PC-9 (cell line): ENCODE measurements at regions of chr6 and their contacts with region 1.

Region 1: DNA sequence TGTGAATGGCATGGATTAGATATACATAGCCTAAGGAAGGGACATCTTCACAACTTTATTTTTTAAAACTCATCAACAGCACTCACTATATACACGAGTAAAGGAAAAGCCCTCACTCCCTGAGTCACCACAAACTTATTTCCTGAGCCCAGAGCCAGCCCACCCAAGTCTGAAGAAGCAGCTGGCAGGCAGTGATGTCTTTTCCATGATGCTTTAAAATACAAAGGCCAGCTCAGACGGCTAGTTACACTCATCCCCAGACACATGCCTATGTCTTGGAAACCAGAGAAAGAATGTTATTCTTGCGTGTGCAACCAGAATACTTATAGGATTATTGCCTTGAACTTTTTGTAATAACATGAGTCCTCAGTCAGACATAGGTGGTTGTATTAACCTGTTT is 114.4 kb downstream of the ADGRG6 start:
- DNase-seq: no peak
- H3K4me3 ChIP-seq: no peak overlapping the region
- H3K27ac ChIP-seq: no peak overlapping the region
- H3K4me1 ChIP-seq: peaks cover 35% of the 10 kb centered on the region
- H3K27me3 ChIP-seq: no peaks in the 10 kb centered on the region
- CTCF ChIP-seq: no peak

Region 2: GRCh38 chr6:142301651-142302370 is 114.4 kb before region 1 on chr6 and contains the start of gene ADGRG6:
- CTCF ChIA-PET with region 1: no interaction called
- POLR2A ChIA-PET with region 1: no interaction called
- intact Hi-C with region 1: loop called (anchors 1 kb)
- DNase-seq: peak; percentile 61
- H3K4me3 ChIP-seq: peak within 1 kb of the TSS; percentile 88
- H3K27ac ChIP-seq: peak within 1 kb of the TSS; percentile 78
- H3K4me1 ChIP-seq: peaks cover 41% of the 10 kb centered on the region
- H3K27me3 ChIP-seq: no peaks in the 10 kb centered on the region
- CTCF ChIP-seq: no peak
- total RNA-seq, gene ADGRG6: 24.0 and 30.3 TPM in 2 replicates

Region 3: DNA sequence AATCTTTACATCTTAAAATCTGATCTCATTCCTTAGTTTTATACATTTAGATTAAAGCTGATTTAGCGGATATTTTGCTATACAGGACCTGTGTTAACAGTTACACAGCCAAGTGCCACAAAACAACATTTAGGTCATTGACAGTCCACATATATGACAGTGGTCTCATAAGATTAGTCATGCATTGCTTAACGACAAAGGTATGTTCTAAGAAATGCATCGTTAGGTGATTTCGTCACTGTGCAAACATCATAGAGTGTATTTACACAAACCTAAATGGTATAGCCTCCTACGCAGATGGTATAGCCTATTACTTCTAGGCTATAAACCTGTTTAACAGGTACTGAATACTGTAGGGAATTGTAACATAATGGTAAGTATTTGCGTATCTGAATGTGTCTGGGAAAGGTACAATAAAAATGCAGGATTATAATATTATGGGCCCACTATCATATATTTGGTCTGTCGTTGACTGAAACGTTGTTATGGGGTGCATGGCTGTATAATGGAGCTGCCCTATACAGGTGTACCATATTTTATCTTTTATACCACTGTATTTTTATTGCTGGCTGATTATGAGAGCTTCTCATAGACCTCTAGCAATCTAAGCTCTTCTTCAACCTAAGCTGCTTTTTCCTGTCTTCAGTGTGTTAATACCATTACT is 92.7 kb before region 1 on chr6:
- CTCF ChIA-PET with region 1: interaction called, 19 read pairs
- POLR2A ChIA-PET with region 1: no interaction called
- intact Hi-C with region 1: no loop called
- DNase-seq: peak; percentile 25 to 98
- H3K4me3 ChIP-seq: peak overlapping the region; percentile 19; the same call in 1 of the 2 replicates
- H3K27ac ChIP-seq: peak overlapping the region; percentile 85
- H3K4me1 ChIP-seq: peaks cover 33% of the 10 kb centered on the region
- H3K27me3 ChIP-seq: no peaks in the 10 kb centered on the region
- CTCF ChIP-seq: no peak

Region 4: GRCh38 chr6:142378138-142378875 is 37.9 kb before region 1 on chr6:
- CTCF ChIA-PET with region 1: no interaction called
- POLR2A ChIA-PET with region 1: no interaction called
- intact Hi-C with region 1: loop called (anchors 5 kb)
- DNase-seq: peak; percentile 34 to 63
- H3K4me3 ChIP-seq: no peak overlapping the region
- H3K27ac ChIP-seq: peak overlapping the region; percentile 8; the same call in 1 of the 2 replicates
- H3K4me1 ChIP-seq: peaks cover 49% of the 10 kb centered on the region
- H3K27me3 ChIP-seq: no peaks in the 10 kb centered on the region
- CTCF ChIP-seq: no peak

Region 5: GRCh38 chr6:142537612-142538478 is 121.7 kb after region 1 on chr6:
- CTCF ChIA-PET with region 1: no interaction called
- POLR2A ChIA-PET with region 1: no interaction called
- intact Hi-C with region 1: loop called (anchors 10 kb)
- DNase-seq: peak in 1 of 2 experiments; percentile 29
- H3K4me3 ChIP-seq: peak overlapping the region; percentile 42; the same call in 1 of the 2 replicates
- H3K27ac ChIP-seq: no peak overlapping the region
- H3K4me1 ChIP-seq: no peaks in the 10 kb centered on the region
- H3K27me3 ChIP-seq: no peaks in the 10 kb centered on the region
- CTCF ChIP-seq: peak; percentile 80

Region 6: GRCh38 chr6:144013486-144013909 is 1597.3 kb after region 1 on chr6:
- CTCF ChIA-PET with region 1: no interaction called
- POLR2A ChIA-PET with region 1: no interaction called
- intact Hi-C with region 1: no loop called
- DNase-seq: peak; percentile 62 to 63
- H3K4me3 ChIP-seq: no peak overlapping the region
- H3K27ac ChIP-seq: no peak overlapping the region
- H3K4me1 ChIP-seq: no peaks in the 10 kb centered on the region
- H3K27me3 ChIP-seq: peaks cover 4% of the 10 kb centered on the region; the same call in 1 of the 2 replicates
- CTCF ChIP-seq: peak; percentile 88